ENCODE measurements at regions of chr16 and their contacts with region 1.

Region 1: DNA sequence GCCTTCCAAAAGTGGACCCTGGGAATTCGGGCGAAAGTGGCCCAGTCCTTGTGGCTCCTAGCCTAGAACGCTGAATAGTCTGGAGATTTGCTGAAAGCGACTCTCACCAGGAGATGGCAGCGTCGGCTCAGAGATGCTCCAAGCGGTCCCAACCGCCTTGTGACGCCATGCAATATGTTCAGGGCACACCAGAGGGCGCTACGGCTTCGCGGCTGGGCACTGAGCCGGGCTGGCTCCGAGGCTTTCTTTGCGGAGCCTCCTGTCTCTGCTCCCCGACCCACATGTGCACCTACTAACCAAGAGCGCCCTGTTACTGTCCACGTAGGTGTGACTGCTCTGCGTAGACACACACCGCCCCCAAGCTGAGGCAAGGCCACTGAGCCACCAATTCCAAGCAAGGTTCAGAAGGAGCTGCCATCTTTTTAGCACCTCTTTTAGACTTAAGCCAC is 36.9 kb downstream of the SYCE1L start:
- DNase-seq: no peak
- ATAC-seq: peak; percentile 98
- H3K4me3 ChIP-seq: peak overlapping the region in 1 of 2 experiments; percentile 14; a peak in 1 of 4 replicates
- H3K27ac ChIP-seq: no peak overlapping the region
- H3K4me1 ChIP-seq: peaks cover 0 to 5% of the 10 kb centered on the region in 2 experiments; a peak in 2 of 4 replicates
- H3K27me3 ChIP-seq: no peaks in the 10 kb centered on the region
- CTCF ChIP-seq: peak; percentile 98 to 99 (median 99)
- POLR2A ChIP-seq: no peak
- RAD21 ChIP-seq: peak; percentile 100

Region 2: GRCh38 chr16:77406677-77407076 is 170.6 kb after region 1 on chr16:
- CTCF ChIA-PET with region 1: no interaction called
- POLR2A ChIA-PET with region 1: no interaction called
- RAD21 ChIA-PET with region 1: no interaction called
- intact Hi-C with region 1: loop called (anchors 10 kb)
- DNase-seq: peak; percentile 4
- ATAC-seq: peak; percentile 55; the same call in 1 of the 2 replicates
- H3K4me3 ChIP-seq: no peak overlapping the region
- H3K27ac ChIP-seq: no peak overlapping the region
- H3K4me1 ChIP-seq: no peaks in the 10 kb centered on the region
- H3K27me3 ChIP-seq: peaks cover 20% of the 10 kb centered on the region; the same call in 1 of the 2 replicates
- CTCF ChIP-seq: peak; percentile 17 to 48 (median 41); a peak in 4 of 6 replicates
- POLR2A ChIP-seq: no peak
- RAD21 ChIP-seq: peak; percentile 43

Region 3: DNA sequence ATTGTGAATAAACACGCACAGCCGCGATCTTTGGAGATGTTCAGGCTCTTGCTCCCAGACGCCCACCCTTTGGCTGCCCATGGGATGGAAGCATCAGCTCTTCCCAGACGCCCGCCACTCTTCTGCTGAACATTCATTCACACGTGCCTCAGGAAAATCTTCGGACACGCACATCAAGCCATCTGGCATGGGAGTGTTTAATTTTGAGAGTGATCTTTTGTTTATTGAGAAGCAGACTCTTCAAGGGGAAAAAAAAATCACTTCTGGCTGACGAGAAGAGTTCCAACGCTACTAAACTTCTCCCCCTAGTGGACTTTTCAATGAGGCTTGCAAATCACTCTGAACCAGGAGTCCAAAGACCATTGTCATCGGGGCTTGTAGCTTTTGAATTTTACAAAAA is 424.2 kb after region 1 on chr16:
- CTCF ChIA-PET with region 1: interaction called, 20 read pairs
- POLR2A ChIA-PET with region 1: no interaction called
- RAD21 ChIA-PET with region 1: no interaction called
- intact Hi-C with region 1: loop called (anchors 1 kb)
- DNase-seq: peak; percentile 22
- ATAC-seq: peak; percentile 74
- H3K4me3 ChIP-seq: no peak overlapping the region
- H3K27ac ChIP-seq: no peak overlapping the region
- H3K4me1 ChIP-seq: no peaks in the 10 kb centered on the region
- H3K27me3 ChIP-seq: no peaks in the 10 kb centered on the region
- CTCF ChIP-seq: peak; percentile 49 to 58 (median 52); a peak in 5 of 6 replicates
- POLR2A ChIP-seq: no peak
- RAD21 ChIP-seq: peak; percentile 55; the same call in 1 of the 2 replicates

Region 4: DNA sequence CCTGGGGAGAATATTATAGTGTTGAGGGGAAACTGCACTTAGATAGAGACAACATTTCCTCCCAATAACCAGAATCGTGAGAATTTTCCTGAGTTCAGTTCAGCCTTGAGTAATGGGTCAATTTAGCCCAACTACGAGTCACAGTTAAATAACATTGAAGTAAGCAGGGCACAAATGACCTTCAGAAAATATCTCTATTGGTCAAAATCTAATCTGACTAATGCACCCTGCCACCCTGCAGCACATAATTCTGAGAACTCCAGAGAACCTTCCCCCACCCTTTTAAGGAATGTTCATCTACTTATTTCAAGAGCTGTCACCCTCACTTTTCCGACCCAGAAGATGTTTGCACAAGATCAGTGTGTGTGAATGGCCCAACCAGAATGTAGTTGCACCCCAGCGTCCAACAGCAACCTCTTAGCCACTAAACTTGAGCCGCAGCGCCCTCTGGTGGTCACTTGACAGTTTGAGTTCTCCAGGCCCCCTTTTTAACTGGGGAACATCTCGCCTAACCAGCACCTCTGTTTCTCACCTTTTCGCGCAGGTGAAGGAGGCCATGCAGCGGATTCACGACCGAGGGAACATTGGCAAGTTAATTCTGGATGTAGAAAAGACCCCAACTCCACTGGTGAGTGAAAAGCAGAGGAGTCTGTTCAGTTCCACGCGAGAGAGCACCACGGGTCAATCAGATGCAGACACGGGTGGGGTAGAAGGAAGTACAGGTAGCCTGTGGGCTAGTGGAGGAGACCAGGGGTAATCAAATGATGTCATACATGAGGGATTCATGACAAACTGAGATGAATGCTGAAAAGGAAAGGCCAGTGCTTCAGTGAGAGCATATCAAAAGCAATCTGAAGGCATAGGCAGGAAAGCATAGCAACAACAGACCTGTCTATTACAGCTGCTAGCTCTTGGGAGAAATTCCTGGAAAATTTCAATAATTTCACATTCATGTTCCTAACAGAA is 735.5 kb after region 1 on chr16:
- CTCF ChIA-PET with region 1: no interaction called
- POLR2A ChIA-PET with region 1: no interaction called
- RAD21 ChIA-PET with region 1: no interaction called
- intact Hi-C with region 1: loop called (anchors 2 kb)
- DNase-seq: peak; percentile 58
- ATAC-seq: peak; percentile 94
- H3K4me3 ChIP-seq: no peak overlapping the region
- H3K27ac ChIP-seq: no peak overlapping the region
- H3K4me1 ChIP-seq: no peaks in the 10 kb centered on the region
- H3K27me3 ChIP-seq: peaks cover 13% of the 10 kb centered on the region
- CTCF ChIP-seq: peak; percentile 69 to 86 (median 71); a peak in 5 of 6 replicates
- POLR2A ChIP-seq: no peak
- RAD21 ChIP-seq: peak; percentile 82